ENCODE measurements at regions of chr1 and their contacts with region 1.

Region 1: GRCh38 chr1:211323156-211324063 is 3.2 kb upstream of the TRAF5 start:
- DNase-seq: peak; percentile 85
- ATAC-seq: peak; percentile 68
- H3K4me3 Mint-ChIP-seq: no peak overlapping the region
- H3K27ac Mint-ChIP-seq: no peak overlapping the region
- H3K4me1 Mint-ChIP-seq: peaks cover 46% of the 10 kb centered on the region
- H3K27me3 Mint-ChIP-seq: no peaks in the 10 kb centered on the region

Region 2: DNA sequence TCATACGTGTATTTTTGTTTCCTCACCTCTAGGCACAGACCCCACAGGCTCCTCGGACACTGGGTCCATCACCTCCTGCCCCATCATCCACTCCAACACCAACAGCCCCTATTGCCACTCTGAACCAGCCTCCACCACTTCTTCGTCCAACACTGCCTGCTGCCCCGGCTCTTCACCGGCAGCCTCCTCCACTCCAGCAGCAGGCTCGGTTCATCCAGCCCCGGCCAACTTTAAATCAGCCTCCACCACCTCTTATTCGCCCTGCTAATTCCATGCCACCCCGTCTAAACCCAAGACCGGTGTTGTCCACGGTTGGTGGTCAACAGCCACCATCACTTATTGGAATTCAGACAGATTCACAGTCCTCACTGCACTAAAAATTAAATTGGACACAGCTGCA is 10.0 kb before region 1 on chr1:
- CTCF ChIA-PET with region 1: interaction called, 11 read pairs
- POLR2A ChIA-PET with region 1: interaction called, 3 read pairs
- DNase-seq: no peak
- ATAC-seq: no peak
- H3K4me3 Mint-ChIP-seq: no peak overlapping the region
- H3K27ac Mint-ChIP-seq: no peak overlapping the region
- H3K4me1 Mint-ChIP-seq: no peaks in the 10 kb centered on the region
- H3K27me3 Mint-ChIP-seq: no peaks in the 10 kb centered on the region

Region 3: GRCh38 chr1:211344152-211344618 is 20.8 kb after region 1 on chr1:
- CTCF ChIA-PET with region 1: interaction called, 65 read pairs
- POLR2A ChIA-PET with region 1: interaction called, 3 read pairs
- DNase-seq: no peak
- ATAC-seq: peak; percentile 49
- H3K4me3 Mint-ChIP-seq: no peak overlapping the region
- H3K27ac Mint-ChIP-seq: no peak overlapping the region
- H3K4me1 Mint-ChIP-seq: peaks cover 62% of the 10 kb centered on the region
- H3K27me3 Mint-ChIP-seq: no peaks in the 10 kb centered on the region

Region 4: DNA sequence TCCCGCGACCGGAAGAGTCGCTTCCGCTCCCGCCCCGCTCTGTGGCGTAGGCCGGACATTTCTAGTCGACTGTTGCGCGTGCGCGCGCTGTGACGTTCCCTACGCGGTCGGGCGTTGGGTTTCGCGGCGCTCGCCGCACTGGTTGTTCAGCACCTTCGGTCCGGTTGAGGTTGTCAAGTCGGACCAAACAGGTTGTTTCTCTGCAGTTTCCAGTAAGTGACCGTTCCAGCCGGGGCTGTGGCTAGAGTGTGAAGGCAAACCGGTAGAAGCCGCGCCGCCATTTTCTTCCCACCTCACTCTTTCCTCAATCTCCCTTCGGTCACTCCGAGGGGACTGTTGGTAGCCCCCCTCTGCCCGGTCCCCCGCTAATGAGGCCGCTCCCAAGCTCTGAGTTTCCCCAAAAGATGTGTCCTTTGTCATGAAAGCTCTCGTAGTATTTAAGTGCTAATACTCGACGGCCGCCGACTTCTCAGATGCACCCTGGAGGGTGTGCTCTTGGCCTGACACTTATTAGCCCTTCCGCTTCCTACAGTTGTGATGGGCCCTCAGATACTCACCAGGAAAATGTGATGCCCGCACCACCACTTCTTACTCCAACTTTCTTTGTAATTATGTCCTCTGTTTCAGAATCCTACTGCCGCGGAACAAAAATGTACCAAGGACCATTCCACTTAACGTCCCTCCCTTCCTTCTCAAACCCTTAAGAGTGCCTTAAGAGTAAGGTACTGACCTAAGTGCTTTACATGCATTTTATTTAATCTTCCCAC is 59.5 kb after region 1 on chr1:
- CTCF ChIA-PET with region 1: interaction called, 11 read pairs
- POLR2A ChIA-PET with region 1: interaction called, 5 read pairs
- DNase-seq: peak; percentile 85
- ATAC-seq: peak; percentile 94
- H3K4me3 Mint-ChIP-seq: peak overlapping the region; percentile 87
- H3K27ac Mint-ChIP-seq: peak overlapping the region; percentile 88
- H3K4me1 Mint-ChIP-seq: peaks cover 23% of the 10 kb centered on the region
- H3K27me3 Mint-ChIP-seq: peaks cover 2% of the 10 kb centered on the region

Region 5: GRCh38 chr1:211476200-211476849 is 152.9 kb after region 1 on chr1:
- CTCF ChIA-PET with region 1: interaction called, 43 read pairs
- POLR2A ChIA-PET with region 1: interaction called, 5 read pairs
- DNase-seq: peak; percentile 88
- ATAC-seq: peak; percentile 87
- H3K4me3 Mint-ChIP-seq: no peak overlapping the region
- H3K27ac Mint-ChIP-seq: no peak overlapping the region
- H3K4me1 Mint-ChIP-seq: no peaks in the 10 kb centered on the region
- H3K27me3 Mint-ChIP-seq: peaks cover 33% of the 10 kb centered on the region